ENCODE measurements at regions of chr7 and their contacts with region 1.

Region 1: GRCh38 chr7:133434055-133434865 is 181.4 kb downstream of the EXOC4 start:
- DNase-seq: peak; percentile 49
- ATAC-seq: peak; percentile 73
- H3K4me3 ChIP-seq: no peak overlapping the region
- H3K27ac ChIP-seq: no peak overlapping the region
- H3K4me1 ChIP-seq: 0 out of 2 replicates have a peak, but pooled peaks cover 2% of the 10 kb centered on the region
- H3K27me3 ChIP-seq: no peaks in the 10 kb centered on the region
- CTCF ChIP-seq: peak; percentile 73
- POLR2A ChIP-seq: no peak
- RAD21 ChIP-seq: peak; percentile 87

Region 2: DNA sequence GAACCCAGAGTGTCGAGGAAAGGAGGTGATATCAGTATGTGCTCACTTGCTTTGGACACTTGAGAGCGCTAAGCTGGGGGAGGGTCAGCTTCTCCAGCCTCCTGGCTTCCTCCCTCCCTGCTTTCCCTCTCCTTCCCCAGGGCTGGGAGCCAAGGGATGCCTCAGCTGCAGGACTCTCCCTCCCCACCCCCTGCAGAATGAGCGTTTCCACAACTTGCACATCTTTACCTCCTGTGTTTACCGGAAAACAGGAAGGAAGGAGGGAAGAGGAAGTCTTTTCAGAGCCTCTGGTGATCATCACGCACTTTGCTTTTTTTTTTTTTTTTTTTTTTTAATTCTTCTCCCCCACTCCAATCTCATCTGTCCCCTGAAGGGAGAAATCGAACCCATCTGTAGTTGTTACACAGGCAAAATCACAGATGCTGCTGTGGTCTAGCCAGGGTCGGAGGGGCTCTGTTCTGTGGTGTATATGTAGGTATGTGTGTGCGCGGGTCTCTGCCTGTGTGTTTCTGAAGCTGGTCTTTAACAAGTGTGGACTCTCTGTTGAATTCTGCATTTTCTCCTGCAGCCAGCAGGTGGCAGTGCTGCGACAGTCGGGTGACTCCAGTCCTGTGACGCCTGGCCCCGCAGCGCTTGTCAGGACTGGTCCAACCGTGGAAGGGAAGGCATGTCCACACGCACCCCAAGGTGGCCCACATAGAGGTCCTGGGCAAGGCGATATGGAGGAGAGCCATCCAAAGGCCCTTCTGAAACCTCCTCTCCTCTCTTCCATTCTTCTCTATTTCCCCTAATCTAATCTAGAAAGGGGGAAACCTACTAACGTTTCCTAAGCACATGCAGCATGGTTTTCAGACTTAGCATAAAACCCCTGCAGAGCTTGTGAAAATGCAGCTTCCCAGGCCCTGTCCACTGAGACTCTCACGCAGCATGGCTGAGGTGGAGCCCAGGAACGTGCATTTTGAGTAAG is 1115.6 kb before region 1 on chr7:
- CTCF ChIA-PET with region 1: no interaction called
- POLR2A ChIA-PET with region 1: no interaction called
- dilution Hi-C with region 1: no loop called
- in situ Hi-C with region 1: loop called (anchors 25 kb)
- intact Hi-C with region 1: loop called (anchors 2 kb)
- DNase-seq: peak; percentile 72
- ATAC-seq: peak; percentile 100
- H3K4me3 ChIP-seq: no peak overlapping the region
- H3K27ac ChIP-seq: no peak overlapping the region
- H3K4me1 ChIP-seq: no peaks in the 10 kb centered on the region
- H3K27me3 ChIP-seq: no peaks in the 10 kb centered on the region
- CTCF ChIP-seq: peak; percentile 82
- POLR2A ChIP-seq: no peak
- RAD21 ChIP-seq: peak; percentile 76

Region 3: GRCh38 chr7:133051066-133051465 is 383.2 kb before region 1 on chr7:
- CTCF ChIA-PET with region 1: interaction called, 3 read pairs
- POLR2A ChIA-PET with region 1: no interaction called
- dilution Hi-C with region 1: no loop called
- in situ Hi-C with region 1: no loop called
- intact Hi-C with region 1: loop called (anchors 10 kb)
- DNase-seq: peak; percentile 68
- ATAC-seq: no peak; the same call in 1 of the 2 replicates
- H3K4me3 ChIP-seq: no peak overlapping the region
- H3K27ac ChIP-seq: no peak overlapping the region
- H3K4me1 ChIP-seq: peaks cover 16% of the 10 kb centered on the region
- H3K27me3 ChIP-seq: no peaks in the 10 kb centered on the region
- CTCF ChIP-seq: 0 out of 2 replicates have a peak, but pooled peaks have one; percentile 23
- POLR2A ChIP-seq: no peak
- RAD21 ChIP-seq: peak; percentile 25; the same call in 1 of the 2 replicates

Region 4: GRCh38 chr7:133230591-133231194 is 203.6 kb before region 1 on chr7:
- CTCF ChIA-PET with region 1: no interaction called
- POLR2A ChIA-PET with region 1: no interaction called
- dilution Hi-C with region 1: no loop called
- in situ Hi-C with region 1: no loop called
- intact Hi-C with region 1: loop called (anchors 5 kb)
- DNase-seq: peak; percentile 56
- ATAC-seq: peak; percentile 73
- H3K4me3 ChIP-seq: no peak overlapping the region
- H3K27ac ChIP-seq: no peak overlapping the region
- H3K4me1 ChIP-seq: no peaks in the 10 kb centered on the region
- H3K27me3 ChIP-seq: peaks cover 7% of the 10 kb centered on the region
- CTCF ChIP-seq: peak; percentile 74
- POLR2A ChIP-seq: no peak
- RAD21 ChIP-seq: peak; percentile 73

Region 5: DNA sequence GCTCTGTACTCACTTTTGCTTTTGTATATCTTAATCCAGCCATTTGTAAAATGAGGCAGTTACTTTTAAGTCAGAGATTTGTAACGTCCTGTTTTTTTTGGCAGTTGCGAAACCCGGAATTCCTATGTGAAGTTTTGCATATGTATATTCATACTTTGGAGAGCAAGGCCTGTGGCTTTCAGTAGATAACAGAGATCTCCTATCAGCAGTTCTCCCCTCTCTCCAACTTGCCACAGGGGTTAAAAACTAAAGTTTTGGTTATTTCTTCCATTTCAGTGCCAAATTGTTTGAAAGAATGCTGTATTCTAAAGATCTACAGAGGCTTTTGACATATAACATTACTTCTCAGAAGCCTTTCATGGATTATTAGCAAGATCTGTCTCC is 78.9 kb before region 1 on chr7:
- CTCF ChIA-PET with region 1: no interaction called
- POLR2A ChIA-PET with region 1: no interaction called
- dilution Hi-C with region 1: no loop called
- in situ Hi-C with region 1: no loop called
- intact Hi-C with region 1: loop called (anchors 5 kb)
- DNase-seq: peak; percentile 93
- ATAC-seq: peak; percentile 85
- H3K4me3 ChIP-seq: no peak overlapping the region
- H3K27ac ChIP-seq: peak overlapping the region; percentile 58; the same call in 1 of the 2 replicates
- H3K4me1 ChIP-seq: peaks cover 11% of the 10 kb centered on the region
- H3K27me3 ChIP-seq: no peaks in the 10 kb centered on the region
- CTCF ChIP-seq: no peak
- POLR2A ChIP-seq: no peak
- RAD21 ChIP-seq: no peak

Region 6: GRCh38 chr7:133853706-133854276 is 419.5 kb after region 1 on chr7:
- CTCF ChIA-PET with region 1: interaction called, 3 read pairs
- POLR2A ChIA-PET with region 1: no interaction called
- dilution Hi-C with region 1: no loop called
- in situ Hi-C with region 1: no loop called
- intact Hi-C with region 1: loop called (anchors 1 kb)
- DNase-seq: peak; percentile 90
- ATAC-seq: peak; percentile 91
- H3K4me3 ChIP-seq: no peak overlapping the region
- H3K27ac ChIP-seq: peak overlapping the region; percentile 44
- H3K4me1 ChIP-seq: peaks cover 9% of the 10 kb centered on the region
- H3K27me3 ChIP-seq: no peaks in the 10 kb centered on the region
- CTCF ChIP-seq: peak; percentile 46
- POLR2A ChIP-seq: no peak
- RAD21 ChIP-seq: peak; percentile 49